ENCODE measurements at regions of chr5 and their contacts with region 1.

Region 1: GRCh38 chr5:113513384-113514288 is at the start of gene YTHDC2:
- DNase-seq: peak; percentile 86 to 89 (median 87)
- H3K4me3 ChIP-seq: peak within 1 kb of the TSS; percentile 53 to 68
- H3K4me3 Mint-ChIP-seq: peak within 1 kb of the TSS; percentile 93 to 97 (median 96)
- H3K27ac ChIP-seq: peak within 1 kb of the TSS; percentile 84
- H3K27ac Mint-ChIP-seq: peak within 1 kb of the TSS; percentile 88 to 98 (median 97)
- H3K4me1 ChIP-seq: peaks cover 32% of the 10 kb centered on the region
- H3K4me1 Mint-ChIP-seq: peaks cover 25 to 44% (median 34%) of the 10 kb centered on the region in 4 donors
- H3K27me3 ChIP-seq: no peaks in the 10 kb centered on the region
- H3K27me3 Mint-ChIP-seq: peaks cover 4 to 7% of the 10 kb centered on the region in 2 donors
- total RNA-seq, gene YTHDC2: 42.8 to 46.4 TPM

Region 2: GRCh38 chr5:112707187-112708102 is 806.2 kb before region 1 on chr5:
- CTCF ChIA-PET with region 1: no interaction called
- POLR2A ChIA-PET with region 1: no interaction called
- intact Hi-C with region 1: loop called (anchors 5 kb)
- DNase-seq: peak; percentile 95 to 99 (median 98)
- H3K4me3 ChIP-seq: peak overlapping the region; percentile 80 to 86
- H3K4me3 Mint-ChIP-seq: peak overlapping the region; percentile 91 to 96 (median 95)
- H3K27ac ChIP-seq: peak overlapping the region; percentile 86
- H3K27ac Mint-ChIP-seq: peak overlapping the region; percentile 89 to 97 (median 93)
- H3K4me1 ChIP-seq: peaks cover 52% of the 10 kb centered on the region
- H3K4me1 Mint-ChIP-seq: peaks cover 41 to 61% (median 48%) of the 10 kb centered on the region in 4 donors
- H3K27me3 ChIP-seq: no peaks in the 10 kb centered on the region
- H3K27me3 Mint-ChIP-seq: no peaks in the 10 kb centered on the region

Region 3: GRCh38 chr5:113330533-113331208 is 183.0 kb before region 1 on chr5:
- CTCF ChIA-PET with region 1: interaction called, 77 read pairs
- POLR2A ChIA-PET with region 1: interaction called, 3 read pairs
- intact Hi-C with region 1: loop called (anchors 1 kb)
- DNase-seq: peak; percentile 41 to 69 (median 65)
- H3K4me3 ChIP-seq: no peak overlapping the region
- H3K4me3 Mint-ChIP-seq: peak overlapping the region in 6 of 8 donors; percentile 0 to 49 (median 30)
- H3K27ac ChIP-seq: no peak overlapping the region
- H3K27ac Mint-ChIP-seq: peak overlapping the region in 3 of 7 donors; percentile 43 to 81 (median 77)
- H3K4me1 ChIP-seq: peaks cover 11% of the 10 kb centered on the region
- H3K4me1 Mint-ChIP-seq: peaks cover 10 to 20% (median 12%) of the 10 kb centered on the region in 4 donors
- H3K27me3 ChIP-seq: no peaks in the 10 kb centered on the region
- H3K27me3 Mint-ChIP-seq: no peaks in the 10 kb centered on the region

Region 4: DNA sequence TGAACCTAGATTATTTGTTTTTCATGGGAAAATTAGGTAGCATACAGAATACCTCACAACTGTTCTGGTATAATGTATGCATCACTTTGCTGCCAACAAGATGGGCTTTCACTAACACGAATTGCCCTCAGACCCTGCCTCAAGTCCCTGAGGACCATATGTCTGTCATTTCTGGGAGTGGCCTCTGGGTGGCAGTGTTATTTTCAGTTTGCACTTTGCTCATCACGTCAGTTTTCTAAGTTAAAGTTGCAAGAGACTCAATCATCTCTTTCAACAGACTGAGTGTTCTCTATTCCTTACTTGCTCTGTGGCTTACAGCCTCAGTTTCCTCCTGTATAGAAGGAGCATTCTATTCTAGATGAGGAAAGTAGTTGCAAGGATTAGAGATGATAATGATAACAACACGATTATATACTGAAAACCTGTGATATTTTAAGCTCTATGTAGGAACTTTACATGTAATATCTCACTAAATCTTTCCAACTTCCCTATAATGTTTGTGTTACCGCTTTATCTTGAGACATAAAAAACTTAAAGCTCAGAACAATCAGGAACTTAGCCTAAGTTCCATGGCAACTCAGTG is 134.6 kb before region 1 on chr5:
- CTCF ChIA-PET with region 1: interaction called, 15 read pairs
- POLR2A ChIA-PET with region 1: no interaction called
- intact Hi-C with region 1: loop called (anchors 1 kb)
- DNase-seq: peak; percentile 43 to 54 (median 48)
- H3K4me3 ChIP-seq: no peak overlapping the region
- H3K4me3 Mint-ChIP-seq: peak overlapping the region; percentile 31 to 84 (median 69)
- H3K27ac ChIP-seq: no peak overlapping the region
- H3K27ac Mint-ChIP-seq: peak overlapping the region in 3 of 7 donors; percentile 5 to 73 (median 19)
- H3K4me1 ChIP-seq: peaks cover 30% of the 10 kb centered on the region
- H3K4me1 Mint-ChIP-seq: peaks cover 33 to 58% (median 48%) of the 10 kb centered on the region in 4 donors
- H3K27me3 ChIP-seq: no peaks in the 10 kb centered on the region
- H3K27me3 Mint-ChIP-seq: peaks cover 4 to 7% of the 10 kb centered on the region in 2 donors

Region 5: GRCh38 chr5:113394658-113395057 is 119.0 kb before region 1 on chr5:
- CTCF ChIA-PET with region 1: no interaction called
- POLR2A ChIA-PET with region 1: no interaction called
- intact Hi-C with region 1: no loop called
- DNase-seq: no peak
- H3K4me3 ChIP-seq: no peak overlapping the region
- H3K4me3 Mint-ChIP-seq: no peak overlapping the region
- H3K27ac ChIP-seq: no peak overlapping the region
- H3K27ac Mint-ChIP-seq: no peak overlapping the region
- H3K4me1 ChIP-seq: no peaks in the 10 kb centered on the region
- H3K4me1 Mint-ChIP-seq: no peaks in the 10 kb centered on the region
- H3K27me3 ChIP-seq: no peaks in the 10 kb centered on the region
- H3K27me3 Mint-ChIP-seq: peaks cover 5 to 8% of the 10 kb centered on the region in 2 donors

Region 6: GRCh38 chr5:113463032-113463431 is 50.6 kb before region 1 on chr5:
- CTCF ChIA-PET with region 1: no interaction called
- POLR2A ChIA-PET with region 1: no interaction called
- intact Hi-C with region 1: no loop called
- DNase-seq: no peak
- H3K4me3 ChIP-seq: no peak overlapping the region
- H3K4me3 Mint-ChIP-seq: no peak overlapping the region
- H3K27ac ChIP-seq: no peak overlapping the region
- H3K27ac Mint-ChIP-seq: no peak overlapping the region
- H3K4me1 ChIP-seq: no peaks in the 10 kb centered on the region
- H3K4me1 Mint-ChIP-seq: no peaks in the 10 kb centered on the region
- H3K27me3 ChIP-seq: no peaks in the 10 kb centered on the region
- H3K27me3 Mint-ChIP-seq: no peaks in the 10 kb centered on the region

Region 7: DNA sequence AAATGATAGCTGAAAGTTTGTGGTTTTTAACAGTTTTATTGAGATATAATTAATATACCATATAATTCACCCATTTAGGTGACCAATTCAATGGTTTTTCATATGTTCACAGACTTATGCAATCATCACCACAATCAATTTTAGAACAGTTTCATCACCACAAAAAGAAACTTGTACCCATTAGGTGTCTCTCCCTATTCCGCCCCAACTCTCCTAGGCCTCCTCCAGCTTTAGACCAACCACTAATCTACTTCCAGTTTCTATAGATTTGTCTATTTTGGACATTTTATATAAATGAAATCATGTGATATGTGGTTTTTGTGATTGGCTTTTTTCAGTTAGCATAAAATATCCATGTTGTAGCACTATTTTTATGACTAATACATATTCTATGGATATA is 38.5 kb after region 1 on chr5:
- CTCF ChIA-PET with region 1: no interaction called
- POLR2A ChIA-PET with region 1: no interaction called
- intact Hi-C with region 1: no loop called
- DNase-seq: no peak
- H3K4me3 ChIP-seq: no peak overlapping the region
- H3K4me3 Mint-ChIP-seq: no peak overlapping the region
- H3K27ac ChIP-seq: no peak overlapping the region
- H3K27ac Mint-ChIP-seq: no peak overlapping the region
- H3K4me1 ChIP-seq: no peaks in the 10 kb centered on the region
- H3K4me1 Mint-ChIP-seq: peaks cover 0 to 2% (median 0%) of the 10 kb centered on the region in 4 donors
- H3K27me3 ChIP-seq: no peaks in the 10 kb centered on the region
- H3K27me3 Mint-ChIP-seq: no peaks in the 10 kb centered on the region